ENCODE measurements at regions of chr19 and their contacts with region 1.

Region 1: DNA sequence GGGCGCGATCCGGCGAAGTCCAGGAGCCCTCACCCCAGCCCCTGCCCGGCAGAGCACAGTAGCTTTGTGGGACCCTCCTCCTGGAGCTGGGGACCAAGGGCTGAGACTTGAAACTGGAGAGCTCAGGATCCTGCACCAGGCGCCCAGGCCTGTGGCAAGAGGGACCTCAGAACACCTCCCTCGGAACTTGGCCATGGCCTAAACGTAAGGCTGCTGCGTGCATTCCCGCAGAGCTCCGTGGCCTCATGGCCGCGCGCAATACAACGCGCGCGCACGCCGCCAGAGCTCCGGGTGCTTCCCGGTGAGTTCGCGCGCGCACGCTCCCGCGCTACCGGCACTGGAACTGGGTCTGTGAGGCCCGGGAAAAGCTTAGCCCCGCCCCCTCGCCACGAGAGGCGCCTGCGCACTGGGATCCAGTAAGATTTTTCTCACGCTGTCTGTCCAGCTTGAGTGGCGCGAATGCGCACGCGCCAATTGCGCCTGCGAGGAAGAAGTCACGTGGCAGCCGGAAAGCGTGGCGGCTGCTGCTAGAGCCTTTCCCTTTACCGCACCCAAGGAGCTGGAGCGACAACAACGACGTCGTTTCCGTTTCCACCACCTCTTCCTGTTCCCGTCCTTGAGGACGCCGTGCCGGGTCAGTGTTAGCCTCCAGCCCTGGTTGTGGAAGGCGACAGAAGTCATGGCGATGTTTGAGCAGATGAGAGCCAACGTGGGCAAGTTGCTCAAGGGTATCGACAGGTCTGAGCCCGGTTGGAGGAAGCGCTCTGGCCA is at the start of gene EIF3K:
- DNase-seq: peak; percentile 97
- ATAC-seq: peak; percentile 28
- H3K4me3 Mint-ChIP-seq: peak within 1 kb of the TSS; percentile 100
- H3K27ac Mint-ChIP-seq: peak within 1 kb of the TSS; percentile 97
- H3K4me1 Mint-ChIP-seq: peaks cover 53% of the 10 kb centered on the region
- H3K27me3 Mint-ChIP-seq: no peaks in the 10 kb centered on the region
- CTCF ChIP-seq: no peak
- total RNA-seq, gene EIF3K: 344 and 385 TPM in 2 replicates

Region 2: DNA sequence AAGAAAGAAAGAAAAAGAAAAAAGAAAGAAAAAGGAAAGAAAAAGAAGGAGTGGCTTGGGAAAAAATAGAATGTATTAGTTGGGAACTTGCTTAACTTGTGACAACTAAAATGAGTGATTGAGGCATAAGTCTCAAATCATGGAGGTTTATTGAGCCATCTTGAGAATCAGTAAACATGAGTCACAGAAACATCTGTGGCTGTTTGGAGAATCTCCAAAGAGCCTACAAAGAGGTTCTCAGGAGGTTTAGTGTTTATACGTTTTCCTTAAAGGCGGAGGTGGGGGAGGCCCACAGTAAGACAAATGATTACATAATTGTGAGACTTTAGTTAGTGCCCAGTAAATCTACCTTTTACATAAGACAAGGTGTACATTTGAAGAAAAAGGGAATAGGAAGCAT is 750.9 kb before region 1 on chr19:
- CTCF ChIA-PET with region 1: no interaction called
- POLR2A ChIA-PET with region 1: no interaction called
- intact Hi-C with region 1: no loop called
- DNase-seq: no peak
- ATAC-seq: no peak
- H3K4me3 Mint-ChIP-seq: no peak overlapping the region
- H3K27ac Mint-ChIP-seq: no peak overlapping the region
- H3K4me1 Mint-ChIP-seq: no peaks in the 10 kb centered on the region
- H3K27me3 Mint-ChIP-seq: peaks cover 10% of the 10 kb centered on the region
- CTCF ChIP-seq: no peak

Region 3: DNA sequence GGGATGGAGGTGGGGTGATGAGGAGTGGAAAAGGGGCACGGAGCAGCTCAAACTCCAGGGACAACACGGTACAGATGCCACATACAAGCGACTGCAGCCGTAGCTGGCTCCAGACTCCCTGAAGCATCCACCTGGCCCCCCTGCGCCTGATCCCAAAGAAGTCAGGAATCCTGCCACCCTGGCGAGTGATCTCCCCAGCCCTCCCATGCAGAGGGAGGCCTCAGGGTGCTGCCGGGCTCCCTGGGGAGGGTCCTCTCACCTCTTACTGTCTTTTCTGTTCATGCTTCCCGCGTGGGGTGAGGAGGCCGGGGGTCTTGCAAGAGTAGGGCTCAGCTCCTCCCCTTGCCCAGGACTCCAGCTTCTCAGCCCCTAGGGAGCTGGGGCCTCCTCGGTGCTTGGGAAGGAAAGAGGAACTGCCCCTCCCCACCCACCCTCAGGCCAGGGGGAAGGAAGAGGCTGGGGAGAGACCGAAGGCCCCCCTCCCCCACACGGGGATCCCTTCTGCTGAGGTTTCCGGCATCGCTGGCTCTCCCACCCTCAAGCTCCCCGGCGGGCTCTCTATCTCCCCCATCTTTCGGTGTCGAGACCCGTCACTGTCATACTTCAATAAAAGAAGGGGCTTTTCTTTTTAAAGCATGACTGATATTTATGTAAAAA is 192.8 kb before region 1 on chr19 and contains the start of gene RASGRP4:
- CTCF ChIA-PET with region 1: interaction called, 3 read pairs
- POLR2A ChIA-PET with region 1: interaction called, 9 read pairs
- intact Hi-C with region 1: loop called (anchors 1 kb)
- DNase-seq: peak; percentile 66
- ATAC-seq: peak; percentile 76
- H3K4me3 Mint-ChIP-seq: peak within 1 kb of the TSS; percentile 74
- H3K27ac Mint-ChIP-seq: peak within 1 kb of the TSS; percentile 94
- H3K4me1 Mint-ChIP-seq: peaks cover 39% of the 10 kb centered on the region
- H3K27me3 Mint-ChIP-seq: no peaks in the 10 kb centered on the region
- CTCF ChIP-seq: no peak
- total RNA-seq, gene RASGRP4: 3.2 and 3.6 TPM in 2 replicates

Region 4: GRCh38 chr19:38559428-38560401 is 59.1 kb before region 1 on chr19:
- CTCF ChIA-PET with region 1: interaction called, 11 read pairs
- POLR2A ChIA-PET with region 1: interaction called, 45 read pairs
- intact Hi-C with region 1: loop called (anchors 1 kb)
- DNase-seq: no peak
- ATAC-seq: peak; percentile 82
- H3K4me3 Mint-ChIP-seq: peak overlapping the region; percentile 75
- H3K27ac Mint-ChIP-seq: peak overlapping the region; percentile 90
- H3K4me1 Mint-ChIP-seq: peaks cover 57% of the 10 kb centered on the region
- H3K27me3 Mint-ChIP-seq: peaks cover 6% of the 10 kb centered on the region
- CTCF ChIP-seq: no peak

Region 5: DNA sequence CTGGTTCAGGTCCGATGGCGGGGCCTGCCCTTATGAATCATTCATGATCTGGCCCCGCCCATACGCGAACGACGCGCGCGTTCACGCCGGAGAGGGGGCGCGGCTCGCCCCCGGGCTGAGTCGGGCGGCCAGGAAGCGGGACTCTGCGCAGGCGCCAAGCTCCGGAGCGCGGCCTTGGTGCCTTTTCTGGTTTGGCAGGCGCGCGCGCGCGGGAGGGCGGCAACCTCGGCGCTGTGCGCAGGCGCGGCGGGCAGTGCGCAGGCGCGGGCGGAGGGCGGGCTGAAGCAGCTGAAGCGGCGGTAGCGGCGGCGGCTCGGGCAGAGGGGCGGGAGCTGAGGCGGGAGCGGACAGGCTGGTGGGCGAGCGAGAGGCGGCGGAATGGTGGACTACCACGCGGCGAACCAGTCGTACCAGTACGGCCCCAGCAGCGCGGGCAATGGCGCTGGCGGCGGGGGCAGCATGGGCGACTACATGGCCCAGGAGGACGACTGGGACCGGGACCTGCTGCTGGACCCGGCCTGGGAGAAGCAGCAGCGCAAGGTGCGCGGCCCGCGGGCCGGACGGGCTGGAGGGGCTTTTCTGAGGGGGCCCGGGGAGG is 28.7 kb after region 1 on chr19 and contains the start of gene ACTN4:
- CTCF ChIA-PET with region 1: no interaction called
- POLR2A ChIA-PET with region 1: interaction called, 19 read pairs
- intact Hi-C with region 1: loop called (anchors 1 kb)
- DNase-seq: peak; percentile 100
- ATAC-seq: peak; percentile 91
- H3K4me3 Mint-ChIP-seq: peak within 1 kb of the TSS; percentile 95
- H3K27ac Mint-ChIP-seq: peak within 1 kb of the TSS; percentile 82
- H3K4me1 Mint-ChIP-seq: peaks cover 42% of the 10 kb centered on the region
- H3K27me3 Mint-ChIP-seq: no peaks in the 10 kb centered on the region
- CTCF ChIP-seq: no peak
- total RNA-seq, gene ACTN4: 197 and 198 TPM in 2 replicates

Region 6: GRCh38 chr19:38691938-38692457 is 73.2 kb after region 1 on chr19:
- CTCF ChIA-PET with region 1: no interaction called
- POLR2A ChIA-PET with region 1: no interaction called
- intact Hi-C with region 1: no loop called
- DNase-seq: no peak
- ATAC-seq: no peak
- H3K4me3 Mint-ChIP-seq: no peak overlapping the region
- H3K27ac Mint-ChIP-seq: peak overlapping the region; percentile 61
- H3K4me1 Mint-ChIP-seq: peaks cover 74% of the 10 kb centered on the region
- H3K27me3 Mint-ChIP-seq: no peaks in the 10 kb centered on the region
- CTCF ChIP-seq: no peak

Measured in activated B cell treated with CpG ODN at 0.5 μM for 24 hours (primary cell).